ENCODE measurements at regions of chr12 and their contacts with region 1.

Region 1: GRCh38 chr12:31250179-31250578 is 75.8 kb downstream of the SINHCAF start:
- DNase-seq: no peak
- ATAC-seq: no peak
- H3K4me3 Mint-ChIP-seq: no peak overlapping the region
- H3K27ac Mint-ChIP-seq: no peak overlapping the region
- H3K4me1 Mint-ChIP-seq: no peaks in the 10 kb centered on the region
- H3K27me3 Mint-ChIP-seq: peaks cover 3% of the 10 kb centered on the region
- CTCF ChIP-seq: no peak

Region 2: GRCh38 chr12:31629756-31630732 is 379.9 kb after region 1 on chr12:
- CTCF ChIA-PET with region 1: no interaction called
- POLR2A ChIA-PET with region 1: no interaction called
- intact Hi-C with region 1: loop called (anchors 10 kb)
- DNase-seq: no peak
- ATAC-seq: no peak
- H3K4me3 Mint-ChIP-seq: no peak overlapping the region
- H3K27ac Mint-ChIP-seq: no peak overlapping the region
- H3K4me1 Mint-ChIP-seq: no peaks in the 10 kb centered on the region
- H3K27me3 Mint-ChIP-seq: no peaks in the 10 kb centered on the region
- CTCF ChIP-seq: no peak

Measured in activated CD8-positive, alpha-beta T cell treated with anti-CD3 and anti-CD28 coated beads for 36 hours (primary cell).